ENCODE measurements at regions of chr11 and their contacts with region 1.

Region 1: GRCh38 chr11:2532704-2533586 is 88.1 kb downstream of the KCNQ1 start:
- DNase-seq: peak; percentile 81 to 99 (median 92)
- ATAC-seq: peak; percentile 82 to 93 (median 86)
- H3K4me3 ChIP-seq: peak overlapping the region in 1 of 4 donors; percentile 34
- H3K27ac ChIP-seq: peak overlapping the region in 3 of 4 donors; percentile 28 to 52 (median 50)
- H3K4me1 ChIP-seq: peaks cover 0 to 5% (median 0%) of the 10 kb centered on the region in 3 donors
- H3K27me3 ChIP-seq: no peaks in the 10 kb centered on the region
- CTCF ChIP-seq: peak; percentile 91 to 99 (median 96)

Region 2: GRCh38 chr11:2885676-2886081 is 352.7 kb after region 1 on chr11 and contains the start of gene CDKN1C:
- intact Hi-C with region 1: loop called (anchors 2 to 10 kb)
- DNase-seq: peak; percentile 81 to 91 (median 86)
- ATAC-seq: peak; percentile 79 to 83 (median 82)
- H3K4me3 ChIP-seq: peak within 1 kb of the TSS; percentile 38 to 75 (median 54)
- H3K27ac ChIP-seq: peak within 1 kb of the TSS in 3 of 4 donors; percentile 46 to 60 (median 49)
- H3K4me1 ChIP-seq: peaks cover under 1 to 2% (median under 1%) of the 10 kb centered on the region in 3 donors
- H3K27me3 ChIP-seq: no peaks in the 10 kb centered on the region
- CTCF ChIP-seq: no peak
- total RNA-seq, gene CDKN1C: 9.2 to 23.1 (median 19.2) TPM

Region 3: GRCh38 chr11:2892215-2893020 is 359.5 kb after region 1 on chr11:
- intact Hi-C with region 1: loop called (anchors 2 to 10 kb)
- DNase-seq: peak in 3 of 6 donors; percentile 46 to 80 (median 64)
- ATAC-seq: peak in 3 of 4 donors; percentile 56 to 65 (median 59)
- H3K4me3 ChIP-seq: peak overlapping the region in 1 of 4 donors; percentile 29
- H3K27ac ChIP-seq: peak overlapping the region in 2 of 4 donors; percentile 3 to 13
- H3K4me1 ChIP-seq: peaks cover 14 to 23% (median 17%) of the 10 kb centered on the region in 3 donors
- H3K27me3 ChIP-seq: no peaks in the 10 kb centered on the region
- CTCF ChIP-seq: peak; percentile 69 to 83 (median 80)

Measured in pancreas (tissue), 10 donors.